ENCODE measurements at regions of chr1 and their contacts with region 1.

Region 1: DNA sequence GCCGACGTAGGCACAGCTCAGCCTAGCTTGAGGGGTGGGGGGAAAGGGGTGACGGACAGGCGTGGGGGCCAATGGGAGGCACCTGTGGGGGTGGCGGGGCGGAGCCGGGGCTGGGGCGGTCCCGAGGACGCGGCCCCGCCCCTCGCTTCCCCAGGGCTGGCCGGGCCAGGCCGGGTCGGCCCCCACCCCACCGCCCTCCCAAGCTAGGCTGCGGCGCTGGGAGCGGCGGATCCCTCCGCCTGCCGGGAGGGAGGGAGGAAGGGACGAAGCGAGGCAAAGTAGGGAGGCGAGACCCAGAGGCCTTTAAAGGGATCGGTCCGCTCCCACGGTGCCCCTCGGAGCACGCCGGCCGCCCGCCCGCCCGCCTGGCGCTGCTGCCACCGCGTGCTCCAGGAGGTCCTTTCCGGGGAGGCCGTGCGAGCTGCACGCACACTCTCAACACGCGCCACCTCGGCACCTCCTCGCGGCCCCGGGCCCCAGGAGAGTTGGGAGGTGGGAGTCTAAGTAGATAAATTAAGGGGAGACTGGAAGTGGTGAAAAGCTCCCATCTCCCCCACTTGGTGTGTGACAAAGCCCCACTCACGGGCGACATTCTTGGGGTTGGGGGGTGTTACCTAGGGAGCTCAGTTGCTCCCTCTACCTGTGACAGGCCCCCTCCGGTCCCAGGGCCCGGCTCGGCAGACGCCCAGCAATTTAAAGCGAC is 373 bp upstream of the MEF2D start:
- DNase-seq: peak; percentile 90 to 99
- H3K4me3 ChIP-seq: peak overlapping the region; percentile 100
- CTCF ChIP-seq: peak in 1 of 3 donors; percentile 7
- POLR2A ChIP-seq: peak in 1 of 2 donors; percentile 84

Region 2: DNA sequence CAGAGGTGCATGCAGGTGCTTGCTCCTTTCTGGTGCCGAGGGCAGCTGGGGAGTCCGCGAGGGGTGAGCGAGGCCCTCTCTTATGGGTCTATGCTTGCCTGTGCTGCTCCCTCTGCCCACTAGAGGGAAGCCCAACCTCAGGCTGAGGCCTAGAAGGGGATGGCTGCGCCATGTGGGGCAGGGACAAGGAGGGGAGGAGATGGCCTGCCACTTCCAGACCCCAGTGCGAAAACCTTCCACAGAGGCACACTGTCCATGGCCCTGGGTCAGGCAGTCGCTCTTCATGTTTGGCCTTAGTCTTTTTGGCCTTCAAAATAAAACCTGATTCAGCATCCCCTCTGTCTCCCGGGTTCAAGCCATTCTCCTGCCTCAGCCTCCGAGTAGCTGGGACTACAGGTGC is 117.9 kb before region 1 on chr1:
- intact Hi-C with region 1: no loop called
- DNase-seq: no peak
- H3K4me3 ChIP-seq: no peak overlapping the region
- CTCF ChIP-seq: peak in 1 of 3 donors; percentile 15
- POLR2A ChIP-seq: no peak

Region 3: DNA sequence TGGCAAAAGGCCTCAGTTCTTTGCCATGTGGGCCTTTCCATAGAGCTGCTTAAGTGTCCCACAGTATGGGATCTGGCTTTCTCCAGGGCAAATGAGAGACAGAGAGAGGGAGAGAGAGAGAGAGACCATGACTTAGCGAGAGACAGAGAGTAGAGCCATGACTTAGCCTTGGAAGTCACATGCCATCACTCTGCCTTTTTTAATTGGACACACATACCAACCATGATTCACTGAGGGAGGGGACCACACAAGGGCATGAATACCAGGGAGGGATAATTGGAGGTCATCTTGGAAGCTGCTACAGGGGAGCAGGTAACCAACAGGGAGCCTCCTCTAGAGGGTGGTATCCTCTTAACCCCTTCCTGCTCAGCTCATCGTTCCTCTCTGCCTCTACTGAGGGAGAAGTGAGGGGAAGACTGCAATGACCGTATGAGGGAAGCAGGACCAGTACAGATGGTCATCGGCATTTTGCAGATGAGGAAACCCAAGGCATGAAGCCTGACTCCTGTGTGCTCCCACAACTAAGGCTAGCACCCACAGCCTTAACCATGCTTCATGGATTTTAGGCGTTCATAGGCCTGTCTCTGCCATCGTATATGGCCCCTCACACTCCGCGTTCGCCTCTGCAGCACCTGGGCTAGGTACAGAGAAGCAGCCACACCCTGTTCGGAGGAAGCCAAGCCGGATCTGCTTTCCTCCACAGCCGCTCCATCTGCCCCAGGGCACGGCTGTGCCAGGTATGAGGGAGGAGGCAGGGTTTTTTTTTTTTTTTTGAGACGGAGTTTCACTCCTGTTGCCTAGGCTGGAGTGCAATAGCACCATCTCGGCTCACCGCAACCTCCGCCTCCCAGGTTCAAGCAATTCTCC is 38.9 kb before region 1 on chr1:
- intact Hi-C with region 1: loop called (anchors 5 kb)
- DNase-seq: peak in 1 of 2 donors; percentile 72
- H3K4me3 ChIP-seq: no peak overlapping the region
- CTCF ChIP-seq: no peak
- POLR2A ChIP-seq: no peak

Region 4: DNA sequence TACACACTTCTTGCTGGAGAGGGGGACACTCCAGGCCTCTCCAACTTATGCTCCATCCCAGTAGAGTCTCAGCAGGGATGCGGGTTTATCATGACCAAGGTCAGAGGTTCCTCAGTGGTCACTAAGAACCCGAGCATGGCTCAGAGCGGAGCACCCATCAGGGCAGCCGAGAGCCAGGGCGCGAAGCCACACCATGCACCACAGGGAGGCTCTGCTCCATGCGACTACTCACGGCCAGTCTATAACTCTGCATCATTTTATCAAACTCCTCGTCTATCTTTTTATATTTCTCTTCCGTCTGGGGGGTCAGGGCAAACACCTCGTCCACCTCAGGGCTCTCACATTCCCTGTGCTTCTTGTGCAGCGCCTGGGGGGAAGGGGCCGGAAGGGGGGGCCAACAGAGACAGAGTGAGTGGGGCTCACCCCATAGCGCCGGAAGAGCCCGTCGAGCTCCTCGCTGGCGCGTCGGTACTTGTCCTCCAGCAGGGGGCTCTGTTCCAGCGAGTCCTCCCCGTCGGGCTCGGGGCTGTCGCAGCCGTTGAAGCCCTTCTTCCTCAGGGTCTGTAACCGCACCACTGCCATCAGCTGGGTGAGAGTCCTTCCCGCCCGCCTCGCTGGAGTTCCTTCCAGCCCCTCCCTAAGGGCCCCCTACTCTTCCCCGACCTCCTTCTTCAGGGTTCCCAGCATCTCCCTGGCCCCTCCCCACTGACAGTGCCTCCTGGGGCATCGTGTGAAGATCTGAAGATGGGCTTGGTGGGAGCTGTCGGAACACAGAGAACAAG is 20.3 kb before region 1 on chr1:
- intact Hi-C with region 1: no loop called
- DNase-seq: no peak
- H3K4me3 ChIP-seq: no peak overlapping the region
- CTCF ChIP-seq: no peak
- POLR2A ChIP-seq: no peak

Measured in lower leg skin (tissue), 4 donors.